Left cardiac atrium (tissue), 4 donors: ENCODE measurements at regions of chr6 and their contacts with region 1.

Region 1: GRCh38 chr6:142112451-142113061 is 20.2 kb upstream of the GJE1 start:
- DNase-seq: peak; percentile 75
- ATAC-seq: no peak

Region 2: DNA sequence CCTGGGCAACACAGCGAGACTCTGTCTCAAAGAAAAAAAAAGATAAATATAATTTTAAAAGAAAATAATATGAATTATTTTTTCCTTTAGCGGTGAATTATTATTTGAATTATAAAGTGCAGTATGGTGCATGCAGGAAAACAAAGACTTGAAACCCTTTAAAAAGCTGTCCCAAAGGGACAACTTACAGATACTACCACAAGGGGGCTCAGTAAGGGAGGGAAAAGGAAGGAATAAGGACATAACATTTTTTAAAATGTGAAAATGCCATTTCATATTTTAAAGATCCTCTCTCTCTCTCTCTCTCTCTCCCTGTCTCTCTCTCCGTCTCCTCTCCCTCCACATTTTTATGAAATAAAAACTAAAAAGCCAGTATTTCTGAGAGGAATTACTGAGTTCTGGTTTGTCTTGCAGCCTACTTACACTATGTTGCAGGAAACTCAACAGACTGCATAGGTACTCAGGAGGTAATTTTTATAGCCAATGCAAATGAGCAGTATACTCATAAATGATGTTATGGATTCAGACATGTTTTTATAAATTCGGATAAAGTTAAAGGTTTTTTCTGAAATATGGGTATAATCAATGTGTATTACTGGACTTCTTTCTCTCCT is 434.9 kb before region 1 on chr6:
- intact Hi-C with region 1: loop called (anchors 5 to 10 kb)
- DNase-seq: no peak
- ATAC-seq: no peak